ENCODE measurements at regions of chr1 and their contacts with region 1.

Region 1: GRCh38 chr1:109181105-109181806 is 32.5 kb upstream of the SARS1 start:
- DNase-seq: peak; percentile 71 to 72
- H3K4me3 ChIP-seq: no peak overlapping the region
- H3K4me3 Mint-ChIP-seq: peak overlapping the region; percentile 45
- H3K27ac Mint-ChIP-seq: peak overlapping the region; percentile 73
- H3K4me1 ChIP-seq: peaks cover 35% of the 10 kb centered on the region
- H3K4me1 Mint-ChIP-seq: peaks cover 18% of the 10 kb centered on the region
- H3K27me3 ChIP-seq: no peaks in the 10 kb centered on the region
- H3K27me3 Mint-ChIP-seq: no peaks in the 10 kb centered on the region
- CTCF ChIP-seq: no peak

Region 2: DNA sequence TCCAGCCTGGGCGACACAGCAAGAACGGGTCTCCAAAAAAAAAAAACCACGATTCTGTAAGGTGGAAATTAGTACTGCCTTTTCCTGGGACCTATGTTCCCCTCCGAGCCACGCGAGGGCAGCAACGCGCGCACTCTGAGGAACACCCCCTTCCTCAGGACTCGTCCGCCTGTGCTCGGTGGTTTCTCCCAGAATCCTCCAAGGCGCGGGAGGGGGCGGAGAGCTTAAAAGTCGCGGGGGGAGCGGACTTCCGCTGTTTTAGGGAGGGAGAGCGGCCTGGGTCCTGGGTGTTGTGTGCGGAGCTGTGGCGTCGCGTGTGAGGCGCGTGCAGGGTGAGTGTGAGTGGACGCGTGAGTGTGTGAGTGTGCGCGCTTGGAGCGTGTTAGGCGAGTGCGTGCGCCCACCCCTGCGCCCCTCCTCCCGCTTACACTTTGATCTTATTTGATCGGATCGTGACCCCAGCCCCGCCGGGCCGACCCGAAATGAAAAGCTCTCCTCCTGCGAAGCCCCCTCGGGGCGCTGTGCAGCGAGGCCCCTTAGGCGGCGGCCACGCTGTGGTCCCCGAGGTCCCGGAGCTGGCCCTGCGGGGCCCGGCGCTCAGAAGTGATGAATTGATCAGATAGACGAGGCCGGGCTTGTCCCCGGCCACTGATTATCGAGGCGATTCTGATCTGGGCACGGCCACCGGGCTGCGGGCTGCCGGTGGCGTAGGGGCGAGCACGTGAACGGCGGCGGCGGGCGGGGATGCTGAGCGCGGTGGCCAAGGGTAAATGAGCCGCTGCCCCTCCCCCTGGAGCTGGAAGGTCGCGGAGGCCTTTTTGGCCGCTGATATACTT is 81.1 kb before region 1 on chr1:
- CTCF ChIA-PET with region 1: interaction called, 5 read pairs
- POLR2A ChIA-PET with region 1: interaction called, 14 read pairs
- intact Hi-C with region 1: no loop called
- DNase-seq: peak; percentile 94 to 96
- H3K4me3 ChIP-seq: peak overlapping the region; percentile 84
- H3K4me3 Mint-ChIP-seq: peak overlapping the region; percentile 92
- H3K27ac Mint-ChIP-seq: peak overlapping the region; percentile 98
- H3K4me1 ChIP-seq: 0 out of 2 replicates have a peak, but pooled peaks cover 3% of the 10 kb centered on the region
- H3K4me1 Mint-ChIP-seq: no peaks in the 10 kb centered on the region
- H3K27me3 ChIP-seq: no peaks in the 10 kb centered on the region
- H3K27me3 Mint-ChIP-seq: no peaks in the 10 kb centered on the region
- CTCF ChIP-seq: peak; percentile 52 to 72

Region 3: DNA sequence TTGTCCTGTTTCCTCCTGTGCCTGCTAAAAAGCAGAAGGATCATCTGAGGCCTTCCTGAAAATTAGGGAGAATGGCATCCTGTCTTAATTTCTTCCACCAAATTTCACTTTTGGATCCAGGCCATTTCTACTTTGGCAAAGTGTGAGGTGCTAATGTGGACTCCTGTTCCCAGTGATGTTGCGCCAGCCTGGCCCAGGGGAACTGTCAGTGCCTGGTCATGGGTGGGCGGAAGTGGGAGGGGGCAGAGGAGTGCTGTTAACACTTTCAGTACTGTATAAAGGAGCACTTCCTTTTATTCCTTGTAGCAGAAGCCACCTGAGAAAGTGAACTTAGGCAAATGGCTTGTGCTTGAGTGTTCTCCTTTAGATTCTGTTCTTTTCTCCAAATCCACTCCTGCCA is 47.4 kb before region 1 on chr1:
- CTCF ChIA-PET with region 1: no interaction called
- POLR2A ChIA-PET with region 1: interaction called, 4 read pairs
- intact Hi-C with region 1: loop called (anchors 1 kb)
- DNase-seq: no peak
- H3K4me3 ChIP-seq: no peak overlapping the region
- H3K4me3 Mint-ChIP-seq: no peak overlapping the region
- H3K27ac Mint-ChIP-seq: no peak overlapping the region
- H3K4me1 ChIP-seq: peaks cover 39% of the 10 kb centered on the region
- H3K4me1 Mint-ChIP-seq: peaks cover 18% of the 10 kb centered on the region
- H3K27me3 ChIP-seq: no peaks in the 10 kb centered on the region
- H3K27me3 Mint-ChIP-seq: no peaks in the 10 kb centered on the region
- CTCF ChIP-seq: no peak

Region 4: DNA sequence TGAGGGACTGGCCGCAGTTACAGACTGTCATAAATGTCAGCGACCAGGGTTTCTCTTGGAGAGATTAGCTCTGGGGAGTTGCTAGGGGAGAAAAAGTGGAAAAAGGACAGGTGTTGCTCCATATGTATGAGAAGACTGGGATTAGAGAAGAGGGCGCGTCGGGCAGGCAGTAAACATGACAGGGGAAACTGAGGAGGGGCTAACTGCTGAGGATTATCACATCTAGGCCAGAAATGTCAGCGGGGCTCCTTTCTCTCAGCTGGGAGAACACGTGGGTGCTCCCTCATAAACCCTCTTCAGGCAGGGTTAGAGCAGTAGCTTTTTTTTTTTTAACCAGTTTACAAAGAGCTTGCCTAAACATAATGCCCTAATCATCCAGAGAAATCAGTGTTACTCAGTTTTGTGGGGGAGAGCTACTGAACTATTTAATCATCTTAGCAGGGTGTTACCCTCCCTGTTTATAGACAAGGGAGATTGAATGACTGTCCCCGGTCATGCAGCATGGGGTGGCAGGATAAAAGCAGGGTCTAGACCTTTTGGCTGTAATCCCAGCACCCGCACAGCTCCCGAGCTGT is 32.2 kb before region 1 on chr1:
- CTCF ChIA-PET with region 1: no interaction called
- POLR2A ChIA-PET with region 1: no interaction called
- intact Hi-C with region 1: no loop called
- DNase-seq: no peak
- H3K4me3 ChIP-seq: no peak overlapping the region
- H3K4me3 Mint-ChIP-seq: no peak overlapping the region
- H3K27ac Mint-ChIP-seq: no peak overlapping the region
- H3K4me1 ChIP-seq: peaks cover 9% of the 10 kb centered on the region; the same call in 1 of the 2 replicates
- H3K4me1 Mint-ChIP-seq: peaks cover 7% of the 10 kb centered on the region
- H3K27me3 ChIP-seq: no peaks in the 10 kb centered on the region
- H3K27me3 Mint-ChIP-seq: no peaks in the 10 kb centered on the region
- CTCF ChIP-seq: no peak

Region 5: GRCh38 chr1:109282952-109283747 is 101.9 kb after region 1 on chr1 and contains the start of gene PSRC1:
- CTCF ChIA-PET with region 1: no interaction called
- POLR2A ChIA-PET with region 1: no interaction called
- intact Hi-C with region 1: no loop called
- DNase-seq: peak; percentile 94 to 95
- H3K4me3 ChIP-seq: peak within 1 kb of the TSS; percentile 61
- H3K4me3 Mint-ChIP-seq: peak within 1 kb of the TSS; percentile 93
- H3K27ac Mint-ChIP-seq: peak within 1 kb of the TSS; percentile 84
- H3K4me1 ChIP-seq: peaks cover 5% of the 10 kb centered on the region; the same call in 1 of the 2 replicates
- H3K4me1 Mint-ChIP-seq: no peaks in the 10 kb centered on the region
- H3K27me3 ChIP-seq: no peaks in the 10 kb centered on the region
- H3K27me3 Mint-ChIP-seq: no peaks in the 10 kb centered on the region
- CTCF ChIP-seq: no peak
- total RNA-seq, gene PSRC1: 23.9 and 24.9 TPM in 2 replicates